ENCODE measurements at regions of chr7 and their contacts with region 1.

Region 1: GRCh38 chr7:15747301-15747700 is 60.8 kb upstream of the MEOX2 start:
- DNase-seq: no peak
- H3K4me3 ChIP-seq: no peak overlapping the region
- H3K27ac ChIP-seq: no peak overlapping the region
- H3K4me1 ChIP-seq: no peaks in the 10 kb centered on the region
- H3K27me3 ChIP-seq: no peaks in the 10 kb centered on the region
- CTCF ChIP-seq: no peak
- POLR2A ChIP-seq: no peak

Region 2: GRCh38 chr7:15209429-15209828 is 537.9 kb before region 1 on chr7:
- intact Hi-C with region 1: loop called (anchors 10 kb)
- DNase-seq: no peak
- H3K4me3 ChIP-seq: no peak overlapping the region
- H3K27ac ChIP-seq: no peak overlapping the region
- H3K4me1 ChIP-seq: no peaks in the 10 kb centered on the region
- H3K27me3 ChIP-seq: no peaks in the 10 kb centered on the region
- CTCF ChIP-seq: no peak
- POLR2A ChIP-seq: no peak

Measured in vagina (tissue), 2 donors.